CD8-positive, alpha-beta T cell (primary cell): ENCODE measurements at regions of chr14 and their contacts with region 1.

Region 1: GRCh38 chr14:20327005-20327869 is 5.8 kb downstream of the CCNB1IP1 start:
- DNase-seq: peak in 3 of 9 experiments; percentile 35 to 83 (median 76)
- ATAC-seq: peak; percentile 62
- H3K4me3 ChIP-seq: no peak overlapping the region
- H3K4me3 Mint-ChIP-seq: no peak overlapping the region
- H3K27ac ChIP-seq: no peak overlapping the region
- H3K27ac Mint-ChIP-seq: peak overlapping the region; percentile 62
- H3K4me1 ChIP-seq: peaks cover 6% of the 10 kb centered on the region
- H3K4me1 Mint-ChIP-seq: peaks cover 26% of the 10 kb centered on the region
- H3K27me3 ChIP-seq: no peaks in the 10 kb centered on the region
- H3K27me3 Mint-ChIP-seq: no peaks in the 10 kb centered on the region
- CTCF ChIP-seq: peak; percentile 98

Region 2: DNA sequence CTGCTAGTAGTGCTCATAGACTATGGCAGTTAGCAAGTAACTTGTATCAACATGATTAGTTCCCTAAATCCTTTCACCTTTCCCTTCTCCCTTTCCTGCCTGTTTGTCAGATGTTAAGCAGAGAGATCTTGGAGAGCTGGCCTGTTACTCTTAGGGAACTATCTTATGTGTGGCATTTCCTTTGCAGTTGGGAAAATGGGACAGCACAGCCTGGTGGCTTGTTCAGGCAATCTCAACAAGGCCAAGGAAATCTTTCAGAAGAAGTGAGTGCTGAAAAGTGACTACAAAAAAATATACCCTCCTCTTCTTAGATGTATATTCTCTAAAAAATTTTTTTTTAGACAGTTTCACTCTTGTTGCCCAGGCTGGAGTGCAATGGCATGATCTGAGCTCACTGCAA is 23.6 kb after region 1 on chr14:
- CTCF ChIA-PET with region 1: interaction called, 7 read pairs
- POLR2A ChIA-PET with region 1: no interaction called
- intact Hi-C with region 1: loop called in 1 of 2 experiments (anchors 1 kb)
- DNase-seq: peak in 1 of 9 experiments; percentile 25
- ATAC-seq: no peak
- H3K4me3 ChIP-seq: no peak overlapping the region
- H3K4me3 Mint-ChIP-seq: no peak overlapping the region
- H3K27ac ChIP-seq: no peak overlapping the region
- H3K27ac Mint-ChIP-seq: no peak overlapping the region
- H3K4me1 ChIP-seq: no peaks in the 10 kb centered on the region
- H3K4me1 Mint-ChIP-seq: no peaks in the 10 kb centered on the region
- H3K27me3 ChIP-seq: no peaks in the 10 kb centered on the region
- H3K27me3 Mint-ChIP-seq: no peaks in the 10 kb centered on the region
- CTCF ChIP-seq: no peak

Region 3: GRCh38 chr14:20469242-20469889 is 142.1 kb after region 1 on chr14 and contains the start of gene PNP:
- CTCF ChIA-PET with region 1: interaction called, 6 read pairs
- POLR2A ChIA-PET with region 1: no interaction called
- intact Hi-C with region 1: loop called in 1 of 2 experiments (anchors 5 kb)
- DNase-seq: peak; percentile 74 to 93 (median 86)
- ATAC-seq: peak; percentile 85
- H3K4me3 ChIP-seq: peak within 1 kb of the TSS; percentile 91 to 93
- H3K4me3 Mint-ChIP-seq: peak within 1 kb of the TSS; percentile 98
- H3K27ac ChIP-seq: peak within 1 kb of the TSS; percentile 74 to 88
- H3K27ac Mint-ChIP-seq: peak within 1 kb of the TSS; percentile 97
- H3K4me1 ChIP-seq: peaks cover 35% of the 10 kb centered on the region
- H3K4me1 Mint-ChIP-seq: peaks cover 51% of the 10 kb centered on the region
- H3K27me3 ChIP-seq: no peaks in the 10 kb centered on the region
- H3K27me3 Mint-ChIP-seq: no peaks in the 10 kb centered on the region
- CTCF ChIP-seq: no peak
- total RNA-seq, gene PNP: 59.6 to 62.1 TPM

Region 4: GRCh38 chr14:20494935-20495766 is 167.9 kb after region 1 on chr14:
- CTCF ChIA-PET with region 1: no interaction called
- POLR2A ChIA-PET with region 1: no interaction called
- intact Hi-C with region 1: no loop called
- DNase-seq: no peak
- ATAC-seq: no peak
- H3K4me3 ChIP-seq: no peak overlapping the region
- H3K4me3 Mint-ChIP-seq: no peak overlapping the region
- H3K27ac ChIP-seq: no peak overlapping the region
- H3K27ac Mint-ChIP-seq: no peak overlapping the region
- H3K4me1 ChIP-seq: peaks cover 16% of the 10 kb centered on the region
- H3K4me1 Mint-ChIP-seq: peaks cover 41% of the 10 kb centered on the region
- H3K27me3 ChIP-seq: peaks cover 0 to 3% of the 10 kb centered on the region in 2 experiments
- H3K27me3 Mint-ChIP-seq: no peaks in the 10 kb centered on the region
- CTCF ChIP-seq: no peak

Region 5: DNA sequence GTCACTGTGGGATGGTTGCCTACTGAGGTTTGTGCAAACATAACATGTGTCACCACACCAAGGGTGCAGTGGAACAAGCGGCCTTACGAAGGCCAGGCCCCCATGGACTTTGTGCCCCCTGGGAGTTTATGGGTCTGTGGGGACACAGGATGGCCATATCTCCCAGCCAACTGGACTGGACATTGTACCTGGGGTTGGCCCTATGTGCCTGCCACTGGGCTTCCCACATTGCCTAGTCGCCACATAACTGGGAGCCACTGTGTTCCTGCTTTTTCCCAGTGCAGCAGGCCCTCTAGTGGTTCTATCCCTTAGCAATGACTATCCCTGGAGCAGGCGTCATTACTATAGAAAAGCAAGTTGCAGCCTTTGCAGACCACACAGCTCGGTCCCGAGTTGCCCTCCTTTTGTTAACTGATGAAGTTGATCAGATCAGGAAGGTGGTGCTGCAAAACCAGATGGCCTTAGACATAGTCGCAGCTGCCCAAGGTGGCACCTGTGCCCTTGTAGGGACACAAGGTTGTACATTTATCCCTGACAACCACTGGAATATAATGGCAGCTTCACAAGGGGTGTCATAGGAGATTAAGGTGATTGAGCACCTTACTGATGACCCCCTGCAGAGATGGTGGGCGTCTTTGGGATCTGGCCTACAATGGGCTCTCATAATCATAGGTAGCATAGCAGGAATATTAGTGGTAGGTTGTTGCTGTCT is 279.1 kb after region 1 on chr14:
- CTCF ChIA-PET with region 1: interaction called, 103 read pairs
- POLR2A ChIA-PET with region 1: interaction called, 3 read pairs
- intact Hi-C with region 1: loop called (anchors 1 kb)
- DNase-seq: no peak
- ATAC-seq: no peak
- H3K4me3 ChIP-seq: no peak overlapping the region
- H3K4me3 Mint-ChIP-seq: no peak overlapping the region
- H3K27ac ChIP-seq: no peak overlapping the region
- H3K27ac Mint-ChIP-seq: no peak overlapping the region
- H3K4me1 ChIP-seq: peaks cover 8% of the 10 kb centered on the region
- H3K4me1 Mint-ChIP-seq: no peaks in the 10 kb centered on the region
- H3K27me3 ChIP-seq: no peaks in the 10 kb centered on the region
- H3K27me3 Mint-ChIP-seq: no peaks in the 10 kb centered on the region
- CTCF ChIP-seq: no peak

Region 6: GRCh38 chr14:20626274-20626673 is 299.0 kb after region 1 on chr14:
- CTCF ChIA-PET with region 1: no interaction called
- POLR2A ChIA-PET with region 1: no interaction called
- intact Hi-C with region 1: no loop called
- DNase-seq: peak in 2 of 9 experiments; percentile 28 to 42
- ATAC-seq: peak; percentile 19
- H3K4me3 ChIP-seq: peak overlapping the region in 1 of 2 experiments; percentile 14
- H3K4me3 Mint-ChIP-seq: peak overlapping the region; percentile 85
- H3K27ac ChIP-seq: no peak overlapping the region
- H3K27ac Mint-ChIP-seq: peak overlapping the region; percentile 23
- H3K4me1 ChIP-seq: peaks cover 44% of the 10 kb centered on the region
- H3K4me1 Mint-ChIP-seq: peaks cover 71% of the 10 kb centered on the region
- H3K27me3 ChIP-seq: peaks cover 0 to 3% of the 10 kb centered on the region in 2 experiments
- H3K27me3 Mint-ChIP-seq: peaks cover 18% of the 10 kb centered on the region
- CTCF ChIP-seq: no peak

Region 7: GRCh38 chr14:20855652-20856291 is 528.5 kb after region 1 on chr14:
- CTCF ChIA-PET with region 1: interaction called, 4 read pairs
- POLR2A ChIA-PET with region 1: no interaction called
- intact Hi-C with region 1: loop called in 1 of 2 experiments (anchors 10 kb)
- DNase-seq: peak in 6 of 9 experiments; percentile 13 to 70 (median 28)
- ATAC-seq: peak; percentile 79
- H3K4me3 ChIP-seq: no peak overlapping the region
- H3K4me3 Mint-ChIP-seq: no peak overlapping the region
- H3K27ac ChIP-seq: no peak overlapping the region
- H3K27ac Mint-ChIP-seq: no peak overlapping the region
- H3K4me1 ChIP-seq: no peaks in the 10 kb centered on the region
- H3K4me1 Mint-ChIP-seq: peaks cover 5% of the 10 kb centered on the region
- H3K27me3 ChIP-seq: no peaks in the 10 kb centered on the region
- H3K27me3 Mint-ChIP-seq: peaks cover 22% of the 10 kb centered on the region
- CTCF ChIP-seq: peak; percentile 50